IMR-90 (cell line): ENCODE measurements at regions of chr9 and their contacts with region 1.

Region 1: DNA sequence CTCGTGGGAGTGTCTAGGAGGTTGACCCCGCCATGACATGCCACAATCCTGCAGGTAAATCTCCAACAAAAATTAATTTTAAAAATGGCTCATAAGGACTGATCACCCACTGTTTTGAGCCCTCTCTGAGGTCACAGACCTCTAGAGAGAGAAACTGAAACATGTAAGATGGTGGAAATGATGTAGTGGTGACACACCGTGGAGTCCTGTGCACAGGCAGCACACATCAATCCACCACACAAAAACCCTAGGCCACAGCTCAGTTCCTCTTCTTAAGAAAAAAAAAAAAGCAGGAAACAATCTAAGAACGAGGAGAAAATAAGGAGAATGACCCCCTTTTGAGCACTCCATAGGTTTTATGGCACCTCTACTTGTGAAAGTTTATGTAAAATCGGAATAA is 93.8 kb upstream of the FAM120A start:
- DNase-seq: no peak
- ATAC-seq: no peak
- H3K4me3 ChIP-seq: no peak overlapping the region
- H3K27ac ChIP-seq: no peak overlapping the region
- H3K4me1 ChIP-seq: no peaks in the 10 kb centered on the region
- H3K27me3 ChIP-seq: no peaks in the 10 kb centered on the region; the same call in 1 of the 2 replicates
- CTCF ChIP-seq: no peak
- POLR2A ChIP-seq: no peak
- RAD21 ChIP-seq: no peak

Region 2: DNA sequence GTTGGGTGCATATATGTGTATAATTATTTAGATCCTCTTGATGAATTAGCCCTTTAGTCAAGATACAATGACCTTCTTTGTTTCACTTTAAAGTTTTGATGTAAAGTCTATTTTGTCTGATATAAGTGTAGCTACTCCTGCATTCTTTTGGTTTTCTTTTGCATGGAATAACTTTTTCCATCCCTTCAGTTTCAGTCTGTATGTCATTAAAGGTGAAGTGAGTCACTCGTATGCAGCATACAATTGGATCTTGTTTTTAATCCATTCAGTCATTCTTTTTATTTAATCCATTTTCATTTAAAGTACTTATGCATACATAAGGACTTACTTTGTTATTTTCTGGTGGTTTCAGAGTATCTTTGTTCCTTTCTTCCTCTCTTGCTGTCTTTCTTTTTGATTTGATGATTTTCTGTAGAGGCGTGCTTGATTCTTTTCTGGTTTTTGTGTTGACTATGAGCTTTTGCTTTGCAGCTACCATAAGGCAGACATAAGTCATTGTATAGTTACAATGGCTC is 57.6 kb after region 1 on chr9:
- CTCF ChIA-PET with region 1: no interaction called
- POLR2A ChIA-PET with region 1: no interaction called
- dilution Hi-C with region 1: no loop called
- in situ Hi-C with region 1: loop called (anchors 10 kb)
- intact Hi-C with region 1: no loop called
- DNase-seq: no peak
- ATAC-seq: no peak
- H3K4me3 ChIP-seq: no peak overlapping the region
- H3K27ac ChIP-seq: no peak overlapping the region
- H3K4me1 ChIP-seq: peaks cover 2% of the 10 kb centered on the region; the same call in 1 of the 2 replicates
- H3K27me3 ChIP-seq: no peaks in the 10 kb centered on the region; the same call in 1 of the 2 replicates
- CTCF ChIP-seq: no peak
- POLR2A ChIP-seq: no peak
- RAD21 ChIP-seq: no peak